ENCODE measurements at regions of chr1 and their contacts with region 1.

Region 1: GRCh38 chr1:204565617-204566582 is 49.7 kb downstream of the MDM4 start:
- DNase-seq: peak; percentile 75 to 87 (median 87)
- H3K4me3 ChIP-seq: no peak overlapping the region
- H3K27ac ChIP-seq: no peak overlapping the region
- H3K4me1 ChIP-seq: no peaks in the 10 kb centered on the region
- H3K27me3 ChIP-seq: no peaks in the 10 kb centered on the region

Region 2: GRCh38 chr1:203609979-203610493 is 955.9 kb before region 1 on chr1:
- CTCF ChIA-PET with region 1: no interaction called
- POLR2A ChIA-PET with region 1: no interaction called
- DNase-seq: peak in 2 of 3 donors; percentile 39 to 45
- H3K4me3 ChIP-seq: no peak overlapping the region
- H3K27ac ChIP-seq: no peak overlapping the region
- H3K4me1 ChIP-seq: peaks cover 6 to 49% (median 47%) of the 10 kb centered on the region in 4 experiments
- H3K27me3 ChIP-seq: no peaks in the 10 kb centered on the region

Region 3: DNA sequence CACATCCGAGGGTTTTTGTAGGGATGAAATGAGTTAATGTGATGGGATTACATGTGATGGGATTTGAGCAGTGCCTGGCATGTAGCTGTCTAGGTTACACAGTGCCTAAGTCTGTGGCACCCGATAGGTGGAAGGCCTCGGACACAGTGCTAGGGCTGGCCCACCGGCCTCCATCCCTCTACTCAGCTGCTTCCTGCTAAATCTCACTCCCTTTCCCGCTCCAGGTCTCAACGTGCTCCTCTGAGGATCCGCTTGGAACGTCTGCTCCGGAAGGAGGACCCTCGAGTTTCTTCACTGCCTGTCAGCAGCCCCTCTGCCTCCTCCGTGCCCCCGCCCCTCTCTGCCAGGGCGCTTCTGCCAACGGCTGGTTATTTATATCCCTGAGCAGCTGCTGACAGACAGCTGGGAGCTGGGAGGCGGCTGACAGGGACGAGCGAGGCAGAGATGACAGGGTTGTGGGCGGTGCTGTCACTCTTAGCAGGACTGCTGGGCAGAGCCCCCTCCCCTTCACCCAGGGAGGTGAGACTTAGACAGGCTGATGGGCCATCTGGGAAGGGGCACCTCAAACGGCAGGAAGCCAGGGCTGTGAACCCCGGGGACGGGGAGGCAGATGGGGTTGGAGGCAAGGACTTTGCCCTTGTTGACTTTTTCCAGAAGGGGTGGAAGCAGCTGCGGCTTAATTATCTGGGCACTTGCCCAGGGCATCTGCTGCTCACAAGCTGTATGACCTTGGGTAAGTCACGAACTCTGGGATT is 146.2 kb after region 1 on chr1:
- CTCF ChIA-PET with region 1: no interaction called
- POLR2A ChIA-PET with region 1: no interaction called
- DNase-seq: peak in 2 of 3 donors; percentile 14 to 15
- H3K4me3 ChIP-seq: no peak overlapping the region
- H3K27ac ChIP-seq: no peak overlapping the region
- H3K4me1 ChIP-seq: peaks cover 0 to 5% (median 0%) of the 10 kb centered on the region in 4 experiments
- H3K27me3 ChIP-seq: peaks cover 0 to 47% (median 23%) of the 10 kb centered on the region in 5 experiments

Region 4: GRCh38 chr1:204812832-204813231 is 246.9 kb after region 1 on chr1:
- CTCF ChIA-PET with region 1: interaction called, 168 read pairs
- POLR2A ChIA-PET with region 1: no interaction called
- DNase-seq: no peak
- H3K4me3 ChIP-seq: no peak overlapping the region
- H3K27ac ChIP-seq: no peak overlapping the region
- H3K4me1 ChIP-seq: no peaks in the 10 kb centered on the region
- H3K27me3 ChIP-seq: peaks cover 0 to 19% (median 9%) of the 10 kb centered on the region in 5 experiments

Measured in common myeloid progenitor, CD34-positive (primary cell).